GM23248 (cell line): ENCODE measurements at regions of chr18 and their contacts with region 1.

Region 1: GRCh38 chr18:60019463-60019840 is 119.7 kb downstream of the PMAIP1 start:
- DNase-seq: peak; percentile 86
- H3K4me3 ChIP-seq: peak overlapping the region; percentile 32; the same call in 1 of the 2 replicates
- H3K27ac ChIP-seq: peak overlapping the region; percentile 64
- H3K4me1 ChIP-seq: peaks cover 40% of the 10 kb centered on the region
- H3K27me3 ChIP-seq: no peaks in the 10 kb centered on the region

Region 2: DNA sequence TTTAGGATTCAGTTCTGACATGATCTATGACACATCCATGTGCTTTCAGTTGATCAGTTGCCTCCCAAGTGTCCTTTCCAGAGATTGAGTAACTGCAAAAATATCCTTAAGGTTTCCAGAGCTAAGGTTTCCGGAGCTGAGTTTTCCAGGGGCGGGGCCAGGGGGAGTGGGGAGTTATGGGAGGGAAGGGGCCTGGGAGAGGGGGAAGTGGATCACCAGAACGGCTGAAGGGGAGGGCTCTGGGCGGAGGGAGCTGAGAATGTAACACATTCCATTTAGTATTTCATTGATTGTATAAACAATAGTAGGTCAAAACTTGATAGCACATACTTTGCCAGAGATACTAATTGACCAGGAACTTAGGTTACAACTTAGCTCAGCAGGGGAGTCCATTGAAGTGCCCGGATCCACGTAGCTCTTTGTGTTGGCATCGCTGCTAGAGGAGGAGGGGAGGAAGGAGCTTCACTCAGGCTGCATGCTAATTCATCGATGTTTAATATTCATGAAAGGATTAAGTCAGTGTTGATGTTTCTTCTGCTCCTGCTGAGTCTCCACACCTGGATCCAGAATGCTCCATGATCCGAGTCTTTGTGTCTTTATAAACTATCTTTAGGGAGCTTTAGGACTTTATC is 1680.4 kb before region 1 on chr18:
- in situ Hi-C with region 1: no loop called
- DNase-seq: no peak
- H3K4me3 ChIP-seq: no peak overlapping the region
- H3K27ac ChIP-seq: no peak overlapping the region
- H3K4me1 ChIP-seq: no peaks in the 10 kb centered on the region
- H3K27me3 ChIP-seq: no peaks in the 10 kb centered on the region

Region 3: GRCh38 chr18:60413944-60414547 is 394.6 kb after region 1 on chr18:
- in situ Hi-C with region 1: loop called (anchors 25 kb)
- DNase-seq: peak; percentile 30
- H3K4me3 ChIP-seq: no peak overlapping the region
- H3K27ac ChIP-seq: no peak overlapping the region
- H3K4me1 ChIP-seq: peaks cover 5% of the 10 kb centered on the region; the same call in 1 of the 2 replicates
- H3K27me3 ChIP-seq: no peaks in the 10 kb centered on the region